ENCODE measurements at regions of chr11 and their contacts with region 1.

Region 1: DNA sequence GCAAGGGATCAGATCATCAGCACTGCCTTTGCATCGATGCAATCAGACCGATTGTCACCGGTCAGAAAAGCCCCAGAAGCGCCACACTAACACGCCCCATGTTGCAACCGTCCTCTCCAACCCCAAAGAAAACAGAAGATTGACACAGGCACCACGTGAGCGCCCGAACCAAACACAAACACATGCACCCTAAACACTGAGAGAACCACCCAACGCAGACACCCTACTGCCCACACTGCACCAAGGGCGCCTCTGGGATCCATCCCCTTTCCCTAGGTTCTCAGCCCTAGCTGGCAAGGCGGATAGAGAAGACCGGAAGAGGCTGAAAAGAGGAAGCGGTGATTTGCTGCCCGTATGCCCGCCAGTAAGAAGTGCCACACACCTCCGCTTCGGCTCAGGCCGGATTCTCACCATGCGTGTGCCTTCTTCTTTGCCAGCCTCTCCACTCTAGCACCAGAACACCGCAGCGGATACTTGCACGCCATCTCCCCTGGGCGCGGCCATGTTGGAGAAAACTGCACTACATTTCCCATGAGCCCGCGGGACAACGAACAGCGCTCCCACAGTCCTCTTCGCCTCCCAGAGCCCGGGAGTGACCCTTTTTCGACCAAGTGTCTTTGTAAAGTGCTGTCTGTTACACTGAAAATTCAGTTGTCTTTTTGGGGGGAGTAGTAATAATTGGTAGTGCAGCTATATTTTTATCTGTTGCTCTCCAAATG is at the start of gene ALKBH8:
- DNase-seq: peak; percentile 66
- ATAC-seq: peak; percentile 88
- H3K4me3 Mint-ChIP-seq: peak within 1 kb of the TSS; percentile 96
- H3K27ac Mint-ChIP-seq: peak within 1 kb of the TSS; percentile 97
- H3K4me1 Mint-ChIP-seq: peaks cover 56% of the 10 kb centered on the region
- H3K27me3 Mint-ChIP-seq: no peaks in the 10 kb centered on the region
- CTCF ChIP-seq: no peak
- total RNA-seq, gene ALKBH8: 11.8 and 12.4 TPM in 2 replicates

Region 2: DNA sequence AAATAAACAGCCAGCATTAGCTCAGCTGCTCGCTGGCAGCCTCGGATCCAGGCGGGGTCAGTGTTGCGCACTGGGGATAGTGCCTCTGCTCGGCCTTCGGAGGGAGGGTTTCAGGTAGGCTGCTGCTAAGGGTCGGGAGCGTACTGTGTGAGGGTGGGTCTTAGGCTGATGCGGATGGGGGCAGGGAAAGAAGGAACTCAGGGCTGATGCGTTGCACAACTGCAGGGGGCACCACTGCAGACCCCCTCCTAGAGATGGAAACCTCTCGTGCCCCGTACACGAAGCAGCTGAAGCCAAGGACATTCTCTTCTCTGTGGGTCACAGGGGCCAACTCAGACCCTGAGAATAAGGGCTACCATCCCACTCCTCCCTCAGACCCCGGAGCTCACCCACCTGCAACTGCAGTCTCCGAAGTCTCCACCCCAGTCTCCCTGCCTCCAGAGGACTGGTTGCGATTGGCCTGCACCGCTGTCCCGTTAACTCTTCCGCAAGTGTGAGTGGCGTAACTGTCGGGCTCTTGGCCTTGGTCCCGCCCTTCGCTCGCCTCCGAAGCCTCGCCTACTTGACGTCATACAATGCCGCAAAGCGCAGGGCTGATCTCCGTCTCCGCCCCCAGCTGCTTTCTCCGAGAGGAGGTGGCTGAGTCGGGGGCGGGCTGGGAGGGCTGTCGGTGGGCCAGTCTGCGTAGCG is 1488.3 kb before region 1 on chr11 and contains the start of gene KBTBD3:
- CTCF ChIA-PET with region 1: no interaction called
- POLR2A ChIA-PET with region 1: no interaction called
- intact Hi-C with region 1: loop called (anchors 10 kb)
- DNase-seq: peak; percentile 91
- ATAC-seq: peak; percentile 90
- H3K4me3 Mint-ChIP-seq: peak within 1 kb of the TSS; percentile 99
- H3K27ac Mint-ChIP-seq: peak within 1 kb of the TSS; percentile 98
- H3K4me1 Mint-ChIP-seq: peaks cover 42% of the 10 kb centered on the region
- H3K27me3 Mint-ChIP-seq: no peaks in the 10 kb centered on the region
- CTCF ChIP-seq: no peak
- total RNA-seq, gene KBTBD3: 6.5 and 7.7 TPM in 2 replicates

Region 3: DNA sequence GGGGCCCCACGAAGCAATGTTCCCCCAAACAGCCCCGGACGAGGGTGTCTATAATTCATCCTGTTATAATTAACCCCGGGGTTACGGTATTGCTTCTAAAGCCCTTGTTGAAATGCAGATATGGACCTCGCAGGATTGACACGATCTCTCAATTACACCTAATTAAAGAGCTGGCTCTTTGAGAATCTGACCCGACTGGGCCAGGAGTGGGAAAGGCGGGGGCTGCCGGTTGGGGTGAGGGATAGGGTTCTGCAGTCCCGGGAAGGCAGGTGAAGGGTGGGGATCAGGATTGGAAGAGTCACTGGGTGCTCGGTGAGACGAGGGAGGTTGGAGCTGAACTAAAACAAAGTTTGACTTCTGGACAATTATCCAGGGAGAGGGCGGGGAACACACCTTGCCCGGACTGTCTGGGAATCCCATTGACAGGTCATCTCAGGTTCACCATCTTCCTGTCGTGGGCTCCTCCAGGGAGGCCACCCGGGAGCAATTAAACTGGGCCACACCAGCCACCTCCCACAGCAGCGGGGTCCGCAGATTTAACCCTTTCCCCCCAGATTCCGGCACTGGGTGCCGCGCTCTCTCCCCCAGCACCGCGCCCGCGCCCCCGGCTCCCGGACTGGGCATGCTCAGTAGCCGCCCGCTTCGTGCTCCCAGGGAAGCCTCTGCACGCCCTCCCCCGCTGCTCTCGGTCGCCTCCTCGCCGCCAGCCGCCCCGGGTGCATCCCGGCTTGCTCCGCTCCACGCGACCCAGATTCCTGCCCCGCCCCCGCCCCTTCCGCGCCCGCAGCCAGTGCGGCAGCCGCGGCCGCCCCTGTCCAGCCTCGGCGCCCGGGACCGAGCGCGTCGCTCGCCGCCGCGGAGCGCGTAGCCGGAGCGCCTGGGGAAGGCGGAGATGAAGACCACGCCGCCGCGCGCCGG is 25.3 kb after region 1 on chr11 and contains the start of gene ELMOD1:
- CTCF ChIA-PET with region 1: no interaction called
- POLR2A ChIA-PET with region 1: no interaction called
- intact Hi-C with region 1: loop called (anchors 1 kb)
- DNase-seq: peak; percentile 25
- ATAC-seq: peak; percentile 49
- H3K4me3 Mint-ChIP-seq: peak within 1 kb of the TSS; percentile 81
- H3K27ac Mint-ChIP-seq: no peak within 1 kb of the TSS
- H3K4me1 Mint-ChIP-seq: peaks cover 28% of the 10 kb centered on the region
- H3K27me3 Mint-ChIP-seq: peaks cover 76% of the 10 kb centered on the region
- CTCF ChIP-seq: no peak
- total RNA-seq, gene ELMOD1: not detected in 2 replicates

Region 4: GRCh38 chr11:107770551-107770951 is 205.2 kb after region 1 on chr11:
- CTCF ChIA-PET with region 1: interaction called, 14 read pairs
- POLR2A ChIA-PET with region 1: no interaction called
- intact Hi-C with region 1: loop called (anchors 1 kb)
- DNase-seq: no peak
- ATAC-seq: no peak
- H3K4me3 Mint-ChIP-seq: no peak overlapping the region
- H3K27ac Mint-ChIP-seq: no peak overlapping the region
- H3K4me1 Mint-ChIP-seq: no peaks in the 10 kb centered on the region
- H3K27me3 Mint-ChIP-seq: peaks cover 8% of the 10 kb centered on the region
- CTCF ChIP-seq: no peak

Region 5: GRCh38 chr11:107898270-107898669 is 332.9 kb after region 1 on chr11:
- CTCF ChIA-PET with region 1: no interaction called
- POLR2A ChIA-PET with region 1: no interaction called
- intact Hi-C with region 1: loop called (anchors 1 kb)
- DNase-seq: no peak
- ATAC-seq: peak; percentile 57
- H3K4me3 Mint-ChIP-seq: no peak overlapping the region
- H3K27ac Mint-ChIP-seq: no peak overlapping the region
- H3K4me1 Mint-ChIP-seq: no peaks in the 10 kb centered on the region
- H3K27me3 Mint-ChIP-seq: peaks cover 5% of the 10 kb centered on the region
- CTCF ChIP-seq: no peak

Region 6: DNA sequence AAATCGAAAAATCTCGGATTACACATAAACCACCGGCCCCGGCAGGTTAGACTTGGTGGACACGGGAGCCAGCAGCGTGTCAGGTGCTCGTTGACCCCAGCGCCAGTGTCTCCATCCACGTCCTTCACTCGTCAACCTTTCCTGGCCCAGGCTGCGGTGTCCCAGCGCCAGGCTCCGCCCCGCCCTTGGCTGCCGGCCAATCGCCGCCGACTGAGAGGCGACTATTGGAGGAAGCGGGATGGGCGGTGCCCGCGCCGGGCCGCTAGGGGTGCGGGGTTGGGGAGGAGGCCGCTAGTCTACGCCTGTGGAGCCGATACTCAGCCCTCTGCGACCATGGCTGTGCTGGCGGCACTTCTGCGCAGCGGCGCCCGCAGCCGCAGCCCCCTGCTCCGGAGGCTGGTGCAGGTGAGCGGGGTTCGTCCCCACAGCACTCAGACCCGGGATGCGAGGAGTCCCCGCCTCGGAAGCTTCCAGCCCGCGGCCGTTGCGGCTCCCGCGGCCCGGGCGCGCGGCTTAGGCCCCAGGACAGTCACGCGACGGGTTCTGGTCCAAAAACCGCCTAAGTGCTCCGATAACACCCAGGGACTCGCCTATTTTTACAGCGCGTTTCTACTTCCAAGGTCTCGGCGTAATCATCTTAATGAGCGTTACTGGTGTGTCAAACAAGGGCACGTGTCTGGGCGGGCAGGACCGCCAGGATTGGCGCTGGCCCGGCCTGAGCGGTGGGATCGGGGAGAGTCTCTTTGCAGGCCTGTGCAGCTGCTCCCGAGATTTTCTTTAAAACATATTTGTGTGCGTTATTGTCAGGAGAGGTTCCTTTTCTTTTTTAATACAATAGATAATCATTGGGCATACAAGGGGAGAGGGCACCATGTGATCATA is 556.1 kb after region 1 on chr11 and contains the start of gene ACAT1:
- CTCF ChIA-PET with region 1: no interaction called
- POLR2A ChIA-PET with region 1: no interaction called
- intact Hi-C with region 1: loop called (anchors 2 kb)
- DNase-seq: peak; percentile 96
- ATAC-seq: peak; percentile 99
- H3K4me3 Mint-ChIP-seq: peak within 1 kb of the TSS; percentile 87
- H3K27ac Mint-ChIP-seq: peak within 1 kb of the TSS; percentile 56
- H3K4me1 Mint-ChIP-seq: peaks cover 39% of the 10 kb centered on the region
- H3K27me3 Mint-ChIP-seq: no peaks in the 10 kb centered on the region
- CTCF ChIP-seq: no peak
- total RNA-seq, gene ACAT1: 50.1 and 51.1 TPM in 2 replicates

Region 7: GRCh38 chr11:108664730-108665525 is 1099.5 kb after region 1 on chr11 and contains the start of gene DDX10:
- CTCF ChIA-PET with region 1: no interaction called
- POLR2A ChIA-PET with region 1: no interaction called
- intact Hi-C with region 1: loop called (anchors 5 kb)
- DNase-seq: peak; percentile 95
- ATAC-seq: peak; percentile 100
- H3K4me3 Mint-ChIP-seq: peak within 1 kb of the TSS; percentile 100
- H3K27ac Mint-ChIP-seq: peak within 1 kb of the TSS; percentile 96
- H3K4me1 Mint-ChIP-seq: peaks cover 46% of the 10 kb centered on the region
- H3K27me3 Mint-ChIP-seq: no peaks in the 10 kb centered on the region
- CTCF ChIP-seq: no peak
- total RNA-seq, gene DDX10: 37.7 and 43.3 TPM in 2 replicates